ENCODE measurements at regions of chr9 and their contacts with region 1.

Region 1: DNA sequence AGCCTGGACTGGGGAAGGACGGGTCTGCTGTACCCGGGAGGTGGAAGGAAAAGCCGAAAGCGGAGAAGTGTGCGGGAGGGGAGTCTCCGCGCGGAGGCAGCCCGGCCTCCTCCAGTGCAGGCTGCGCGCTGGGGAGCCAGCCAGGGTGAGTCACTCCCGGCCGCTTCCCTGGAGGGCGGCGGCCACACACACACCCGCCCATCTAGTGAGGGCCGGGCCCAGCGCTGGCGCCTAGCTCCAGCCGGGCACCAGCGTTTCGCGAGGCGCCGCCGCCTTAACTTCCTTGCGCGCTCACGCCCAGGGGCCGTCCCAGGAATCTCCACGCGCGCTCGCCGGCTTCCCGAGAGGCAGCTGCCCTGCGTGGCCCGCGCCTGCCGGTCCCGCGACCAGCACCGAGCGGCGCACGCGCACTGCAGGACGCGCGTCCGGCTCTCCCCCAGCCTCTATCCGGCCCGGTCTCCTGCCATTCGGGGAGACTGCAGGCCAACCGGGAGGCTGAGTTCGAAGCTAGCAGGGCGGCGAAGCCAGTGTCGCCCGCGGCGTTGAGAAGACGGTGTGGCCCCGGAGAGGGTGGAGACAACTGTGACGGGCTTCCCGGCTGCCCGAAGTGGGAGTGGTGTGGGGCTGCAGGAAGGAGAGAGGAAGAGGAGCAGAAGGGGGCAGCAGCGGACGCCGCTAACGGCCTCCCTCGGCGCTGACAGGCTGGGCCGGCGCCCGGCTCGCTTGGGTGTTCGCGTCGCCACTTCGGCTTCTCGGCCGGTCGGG is at the start of gene JAK2:
- DNase-seq: peak; percentile 89
- ATAC-seq: peak; percentile 76
- H3K4me3 ChIP-seq: peak within 1 kb of the TSS; percentile 67 to 88 (median 80)
- H3K4me3 Mint-ChIP-seq: peak within 1 kb of the TSS; percentile 94
- H3K27ac ChIP-seq: peak within 1 kb of the TSS; percentile 67 to 80
- H3K27ac Mint-ChIP-seq: peak within 1 kb of the TSS; percentile 97
- H3K4me1 ChIP-seq: peaks cover 32 to 34% of the 10 kb centered on the region in 2 donors
- H3K4me1 Mint-ChIP-seq: peaks cover 38% of the 10 kb centered on the region
- H3K27me3 ChIP-seq: no peaks in the 10 kb centered on the region
- H3K27me3 Mint-ChIP-seq: no peaks in the 10 kb centered on the region
- CTCF ChIP-seq: peak; percentile 25
- total RNA-seq, gene JAK2: 24.6 and 26.4 TPM in 2 replicates

Region 2: GRCh38 chr9:4604678-4605095 is 380.1 kb before region 1 on chr9:
- CTCF ChIA-PET with region 1: interaction called, 4 read pairs
- POLR2A ChIA-PET with region 1: no interaction called
- intact Hi-C with region 1: loop called (anchors 2 kb)
- DNase-seq: peak; percentile 69
- ATAC-seq: peak; percentile 33
- H3K4me3 ChIP-seq: no peak overlapping the region
- H3K4me3 Mint-ChIP-seq: no peak overlapping the region
- H3K27ac ChIP-seq: no peak overlapping the region
- H3K27ac Mint-ChIP-seq: no peak overlapping the region
- H3K4me1 ChIP-seq: no peaks in the 10 kb centered on the region
- H3K4me1 Mint-ChIP-seq: peaks cover 4% of the 10 kb centered on the region
- H3K27me3 ChIP-seq: peaks cover 0 to 3% (median 0%) of the 10 kb centered on the region in 4 experiments
- H3K27me3 Mint-ChIP-seq: no peaks in the 10 kb centered on the region
- CTCF ChIP-seq: peak; percentile 59

Region 3: DNA sequence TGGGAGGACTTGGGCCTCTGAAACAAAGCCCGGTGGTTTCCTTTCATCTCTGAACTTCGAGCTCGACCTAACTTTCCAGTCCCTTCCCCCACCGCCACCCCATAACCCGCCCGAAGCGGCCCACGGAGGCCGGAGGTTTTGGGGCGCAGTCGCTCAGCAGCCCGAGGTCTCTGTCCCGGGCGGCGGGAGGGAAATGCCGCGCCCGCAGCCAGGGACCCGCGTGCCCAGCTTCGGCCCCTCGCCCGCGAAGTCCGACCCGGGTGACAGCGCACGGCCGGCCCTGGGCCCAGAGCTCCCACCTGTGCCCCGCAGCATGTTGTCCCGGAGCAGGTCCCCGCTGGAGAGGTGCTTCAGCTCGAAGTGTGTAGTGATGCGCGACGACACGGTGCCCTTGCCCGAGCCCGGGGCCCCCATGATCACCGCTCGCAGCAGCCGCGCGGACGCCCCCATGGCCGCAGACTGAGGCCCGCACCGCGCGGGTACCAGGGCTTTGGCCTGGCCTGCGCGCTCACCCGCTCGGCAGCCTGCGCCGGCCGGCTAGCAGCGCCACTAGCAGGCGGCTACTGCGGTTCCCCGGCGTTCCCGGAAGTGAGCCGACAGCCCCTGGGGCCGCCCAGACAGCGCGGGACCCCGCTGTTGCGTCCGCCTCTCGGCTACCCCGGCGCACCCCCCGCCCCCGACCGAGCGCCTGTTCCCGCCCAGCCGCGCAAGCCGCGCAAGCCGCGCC is 244.0 kb before region 1 on chr9 and contains the start of gene AK3:
- CTCF ChIA-PET with region 1: interaction called, 3 read pairs
- POLR2A ChIA-PET with region 1: no interaction called
- intact Hi-C with region 1: loop called (anchors 1 kb)
- DNase-seq: peak; percentile 92
- ATAC-seq: peak; percentile 92
- H3K4me3 ChIP-seq: peak within 1 kb of the TSS; percentile 73 to 90 (median 85)
- H3K4me3 Mint-ChIP-seq: peak within 1 kb of the TSS; percentile 89
- H3K27ac ChIP-seq: peak within 1 kb of the TSS; percentile 51 to 83
- H3K27ac Mint-ChIP-seq: peak within 1 kb of the TSS; percentile 90
- H3K4me1 ChIP-seq: peaks cover 19 to 23% of the 10 kb centered on the region in 2 donors
- H3K4me1 Mint-ChIP-seq: peaks cover 27% of the 10 kb centered on the region
- H3K27me3 ChIP-seq: no peaks in the 10 kb centered on the region
- H3K27me3 Mint-ChIP-seq: no peaks in the 10 kb centered on the region
- CTCF ChIP-seq: no peak
- total RNA-seq, gene AK3: 20.4 and 22.9 TPM in 2 replicates

Region 4: GRCh38 chr9:4792572-4793458 is 192.0 kb before region 1 on chr9 and contains the start of gene RCL1:
- CTCF ChIA-PET with region 1: interaction called, 8 read pairs
- POLR2A ChIA-PET with region 1: interaction called, 9 read pairs
- intact Hi-C with region 1: loop called (anchors 1 kb)
- DNase-seq: peak; percentile 97
- ATAC-seq: peak; percentile 91
- H3K4me3 ChIP-seq: peak within 1 kb of the TSS; percentile 81 to 96 (median 94)
- H3K4me3 Mint-ChIP-seq: peak within 1 kb of the TSS; percentile 98
- H3K27ac ChIP-seq: peak within 1 kb of the TSS; percentile 89 to 97
- H3K27ac Mint-ChIP-seq: peak within 1 kb of the TSS; percentile 97
- H3K4me1 ChIP-seq: peaks cover 22 to 30% of the 10 kb centered on the region in 2 donors
- H3K4me1 Mint-ChIP-seq: peaks cover 36% of the 10 kb centered on the region
- H3K27me3 ChIP-seq: no peaks in the 10 kb centered on the region
- H3K27me3 Mint-ChIP-seq: peaks cover 1% of the 10 kb centered on the region
- CTCF ChIP-seq: no peak
- total RNA-seq, gene RCL1: 21.7 and 29.6 TPM in 2 replicates

Region 5: GRCh38 chr9:4970970-4971641 is 13.7 kb before region 1 on chr9:
- CTCF ChIA-PET with region 1: interaction called, 10 read pairs
- POLR2A ChIA-PET with region 1: interaction called, 4 read pairs
- intact Hi-C with region 1: loop called (anchors 1 kb)
- DNase-seq: peak; percentile 61
- ATAC-seq: peak; percentile 83
- H3K4me3 ChIP-seq: peak overlapping the region in 4 of 5 experiments; percentile 5 to 55 (median 42)
- H3K4me3 Mint-ChIP-seq: no peak overlapping the region
- H3K27ac ChIP-seq: peak overlapping the region; percentile 26 to 74
- H3K27ac Mint-ChIP-seq: no peak overlapping the region
- H3K4me1 ChIP-seq: peaks cover 26 to 27% of the 10 kb centered on the region in 2 donors
- H3K4me1 Mint-ChIP-seq: peaks cover 18% of the 10 kb centered on the region
- H3K27me3 ChIP-seq: no peaks in the 10 kb centered on the region
- H3K27me3 Mint-ChIP-seq: no peaks in the 10 kb centered on the region
- CTCF ChIP-seq: no peak

Region 6: DNA sequence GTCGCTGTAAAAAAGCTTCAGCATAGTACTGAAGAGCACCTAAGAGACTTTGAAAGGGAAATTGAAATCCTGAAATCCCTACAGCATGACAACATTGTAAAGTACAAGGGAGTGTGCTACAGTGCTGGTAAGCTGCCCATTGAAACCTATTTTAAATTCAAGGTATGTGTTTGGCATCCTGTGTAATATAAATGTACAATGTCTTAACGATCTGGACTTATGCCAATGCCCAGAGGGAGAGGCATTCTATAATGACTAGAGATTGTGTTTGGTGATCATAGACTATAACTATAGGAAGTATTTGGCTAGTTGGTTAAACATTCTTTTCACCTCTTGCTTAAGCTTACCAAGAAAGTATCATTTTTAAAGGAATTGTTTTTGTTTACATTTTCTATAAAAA is 104.9 kb after region 1 on chr9:
- CTCF ChIA-PET with region 1: no interaction called
- POLR2A ChIA-PET with region 1: no interaction called
- intact Hi-C with region 1: no loop called
- DNase-seq: no peak
- ATAC-seq: no peak
- H3K4me3 ChIP-seq: no peak overlapping the region
- H3K4me3 Mint-ChIP-seq: no peak overlapping the region
- H3K27ac ChIP-seq: no peak overlapping the region
- H3K27ac Mint-ChIP-seq: no peak overlapping the region
- H3K4me1 ChIP-seq: no peaks in the 10 kb centered on the region
- H3K4me1 Mint-ChIP-seq: no peaks in the 10 kb centered on the region
- H3K27me3 ChIP-seq: no peaks in the 10 kb centered on the region
- H3K27me3 Mint-ChIP-seq: no peaks in the 10 kb centered on the region
- CTCF ChIP-seq: no peak

Region 7: DNA sequence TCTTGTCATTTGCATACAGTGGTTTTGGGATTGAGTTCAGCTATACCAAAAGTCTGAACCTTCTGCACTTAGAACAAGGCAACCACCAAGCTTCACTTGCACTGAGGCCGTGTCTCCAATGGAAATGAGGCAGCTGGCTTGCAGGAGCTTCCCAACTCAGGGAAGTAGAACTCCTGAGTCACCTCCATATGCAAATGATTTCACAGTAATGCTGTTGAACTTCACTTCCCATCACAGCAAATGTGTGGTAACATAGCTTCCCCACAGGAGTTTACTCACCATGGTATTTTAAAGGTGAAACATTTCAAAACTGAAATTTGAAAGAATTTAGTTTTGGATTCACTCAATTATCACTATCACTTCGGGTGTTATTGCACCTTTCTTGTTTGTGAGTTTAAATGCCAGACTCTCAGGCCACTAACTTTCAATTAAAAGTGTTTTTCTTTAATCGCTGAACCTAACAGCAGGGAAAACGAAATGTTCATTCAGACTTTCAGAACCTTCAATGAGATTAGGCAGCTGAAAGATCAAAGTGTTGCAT is 474.6 kb after region 1 on chr9:
- CTCF ChIA-PET with region 1: no interaction called
- POLR2A ChIA-PET with region 1: no interaction called
- intact Hi-C with region 1: no loop called
- DNase-seq: no peak
- ATAC-seq: no peak
- H3K4me3 ChIP-seq: no peak overlapping the region
- H3K4me3 Mint-ChIP-seq: no peak overlapping the region
- H3K27ac ChIP-seq: no peak overlapping the region
- H3K27ac Mint-ChIP-seq: no peak overlapping the region
- H3K4me1 ChIP-seq: peaks cover 0 to 5% of the 10 kb centered on the region in 2 donors
- H3K4me1 Mint-ChIP-seq: peaks cover 20% of the 10 kb centered on the region
- H3K27me3 ChIP-seq: no peaks in the 10 kb centered on the region
- H3K27me3 Mint-ChIP-seq: no peaks in the 10 kb centered on the region
- CTCF ChIP-seq: no peak

Region 8: DNA sequence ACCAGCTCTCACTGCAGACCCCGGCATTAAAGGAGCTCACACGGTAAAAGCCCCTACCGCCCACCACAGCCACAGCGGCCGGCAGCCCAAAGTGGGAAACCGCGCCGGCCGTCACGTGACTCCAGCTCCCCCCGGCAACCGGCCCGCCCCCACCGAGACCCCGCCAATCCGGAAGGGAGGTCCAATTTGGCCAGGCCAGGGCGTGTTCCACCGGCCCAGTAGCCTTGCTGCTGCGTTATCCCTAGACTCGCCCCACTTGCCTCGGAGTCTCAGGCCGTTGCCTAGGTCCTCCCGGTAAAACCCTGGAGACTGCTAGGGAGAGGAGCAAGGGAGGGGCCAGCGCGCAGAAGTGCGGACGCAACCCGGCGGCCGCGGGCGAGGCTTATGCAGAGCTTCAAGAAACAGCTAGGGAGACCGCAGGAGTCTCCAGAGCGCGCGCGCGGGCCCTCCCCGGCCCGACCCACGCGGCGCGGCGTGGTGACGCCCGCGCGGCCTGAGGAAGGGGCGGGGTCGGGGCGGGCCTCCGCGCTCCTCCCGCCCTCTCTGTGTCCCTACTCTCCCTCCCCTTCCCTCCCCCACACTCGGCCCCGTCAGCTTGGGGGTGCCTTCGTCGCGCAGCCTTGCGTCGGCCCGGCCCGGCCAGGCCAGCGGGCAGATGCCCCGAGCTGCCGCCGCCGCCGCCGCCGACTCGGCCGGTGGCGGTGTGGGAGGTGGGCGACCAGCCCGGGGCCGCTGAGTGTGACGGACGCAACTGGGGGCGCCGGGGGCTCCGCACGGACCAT is 643.9 kb after region 1 on chr9 and contains the start of gene RIC1:
- CTCF ChIA-PET with region 1: no interaction called
- POLR2A ChIA-PET with region 1: no interaction called
- intact Hi-C with region 1: loop called (anchors 1 kb)
- DNase-seq: peak; percentile 96
- ATAC-seq: peak; percentile 79
- H3K4me3 ChIP-seq: peak within 1 kb of the TSS; percentile 82 to 99 (median 92)
- H3K4me3 Mint-ChIP-seq: peak within 1 kb of the TSS; percentile 98
- H3K27ac ChIP-seq: peak within 1 kb of the TSS; percentile 85 to 93
- H3K27ac Mint-ChIP-seq: peak within 1 kb of the TSS; percentile 99
- H3K4me1 ChIP-seq: peaks cover 52 to 55% of the 10 kb centered on the region in 2 donors
- H3K4me1 Mint-ChIP-seq: peaks cover 59% of the 10 kb centered on the region
- H3K27me3 ChIP-seq: no peaks in the 10 kb centered on the region
- H3K27me3 Mint-ChIP-seq: no peaks in the 10 kb centered on the region
- CTCF ChIP-seq: no peak
- total RNA-seq, gene RIC1: 58.8 and 58.9 TPM in 2 replicates

Region 9: GRCh38 chr9:6353851-6354686 is 1369.3 kb after region 1 on chr9:
- CTCF ChIA-PET with region 1: no interaction called
- POLR2A ChIA-PET with region 1: no interaction called
- intact Hi-C with region 1: no loop called
- DNase-seq: peak; percentile 76
- ATAC-seq: peak; percentile 89
- H3K4me3 ChIP-seq: no peak overlapping the region
- H3K4me3 Mint-ChIP-seq: no peak overlapping the region
- H3K27ac ChIP-seq: no peak overlapping the region
- H3K27ac Mint-ChIP-seq: no peak overlapping the region
- H3K4me1 ChIP-seq: peaks cover 0 to 4% of the 10 kb centered on the region in 2 donors
- H3K4me1 Mint-ChIP-seq: peaks cover 6% of the 10 kb centered on the region
- H3K27me3 ChIP-seq: peaks cover 0 to 5% (median 0%) of the 10 kb centered on the region in 4 experiments
- H3K27me3 Mint-ChIP-seq: peaks cover 11% of the 10 kb centered on the region
- CTCF ChIP-seq: peak; percentile 91

Region 10: DNA sequence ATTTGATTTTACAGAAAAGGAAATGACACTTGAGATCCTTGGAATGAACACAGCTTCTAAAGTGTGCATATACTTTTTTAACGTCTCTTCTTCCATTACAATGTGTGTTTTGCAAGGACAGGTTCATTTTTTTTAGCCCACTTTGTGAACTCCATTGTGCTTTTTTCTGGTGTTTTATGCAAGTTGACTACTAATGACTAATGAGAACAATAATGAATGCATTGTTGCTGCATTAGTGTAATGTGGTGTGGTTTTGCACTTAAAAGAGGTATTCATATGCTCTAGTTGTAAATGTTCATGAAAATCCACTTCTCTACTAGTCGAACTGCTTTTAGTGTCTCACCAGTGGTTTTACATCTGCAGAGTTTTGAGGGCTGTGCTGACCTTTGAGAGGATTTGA is 1521.8 kb after region 1 on chr9:
- CTCF ChIA-PET with region 1: no interaction called
- POLR2A ChIA-PET with region 1: no interaction called
- intact Hi-C with region 1: no loop called
- DNase-seq: no peak
- ATAC-seq: no peak
- H3K4me3 ChIP-seq: no peak overlapping the region
- H3K4me3 Mint-ChIP-seq: no peak overlapping the region
- H3K27ac ChIP-seq: no peak overlapping the region
- H3K27ac Mint-ChIP-seq: no peak overlapping the region
- H3K4me1 ChIP-seq: no peaks in the 10 kb centered on the region
- H3K4me1 Mint-ChIP-seq: no peaks in the 10 kb centered on the region
- H3K27me3 ChIP-seq: no peaks in the 10 kb centered on the region
- H3K27me3 Mint-ChIP-seq: no peaks in the 10 kb centered on the region
- CTCF ChIP-seq: no peak